ENCODE measurements at regions of chr1 and their contacts with region 1.

Region 1: DNA sequence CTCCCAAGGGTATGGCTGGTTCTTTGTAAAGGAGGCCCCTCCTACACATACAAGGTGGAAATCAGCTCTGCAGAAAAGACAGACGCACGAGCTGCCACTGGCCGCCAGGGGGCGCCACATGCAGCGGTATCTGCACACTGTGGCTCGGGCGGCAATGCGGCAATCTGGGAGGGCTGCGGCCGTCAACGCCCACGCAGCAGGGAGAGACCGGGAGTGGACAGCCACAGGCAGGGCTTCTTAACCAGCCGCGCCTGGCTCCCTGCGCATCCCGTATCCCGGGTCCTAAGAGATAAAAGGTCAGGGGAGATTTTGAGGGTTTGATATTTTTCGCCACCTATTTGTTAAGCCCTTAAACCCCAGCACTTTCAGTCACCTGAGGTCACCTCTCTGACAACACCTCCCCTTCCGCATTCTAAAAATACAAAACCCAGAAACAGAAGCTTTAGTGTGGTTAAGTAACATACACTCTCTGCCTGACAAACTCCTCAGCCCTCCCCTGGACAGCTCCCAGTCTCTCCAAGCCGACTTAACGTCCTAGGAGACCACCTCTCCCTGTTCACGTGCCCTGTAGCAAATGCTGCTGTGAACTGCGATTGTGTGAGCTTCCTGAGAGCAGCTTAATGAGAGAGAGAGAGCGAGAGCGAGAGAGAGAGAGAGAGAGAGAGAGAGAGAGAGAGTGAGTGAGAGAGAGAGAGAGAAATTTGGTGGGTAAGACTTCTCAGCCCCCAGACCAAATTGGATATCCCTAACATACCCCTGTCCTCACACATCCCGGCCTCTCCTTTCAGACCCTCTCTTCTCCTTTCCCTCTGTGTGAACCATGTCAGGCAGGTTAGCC is 13.5 kb upstream of the KCNA2 start:
- DNase-seq: peak; percentile 78
- H3K4me3 ChIP-seq: peak overlapping the region; percentile 32
- H3K27ac ChIP-seq: no peak overlapping the region
- H3K4me1 ChIP-seq: peaks cover 9% of the 10 kb centered on the region
- H3K27me3 ChIP-seq: peaks cover 75% of the 10 kb centered on the region
- CTCF ChIP-seq: peak; percentile 91

Region 2: GRCh38 chr1:110524311-110525251 is 95.0 kb before region 1 on chr1:
- intact Hi-C with region 1: loop called (anchors 10 kb)
- DNase-seq: no peak
- H3K4me3 ChIP-seq: peak overlapping the region; percentile 14
- H3K27ac ChIP-seq: no peak overlapping the region
- H3K4me1 ChIP-seq: peaks cover 8% of the 10 kb centered on the region
- H3K27me3 ChIP-seq: peaks cover 99% of the 10 kb centered on the region
- CTCF ChIP-seq: peak; percentile 77

Region 3: GRCh38 chr1:110554871-110555801 is 64.5 kb before region 1 on chr1:
- intact Hi-C with region 1: loop called (anchors 10 kb)
- DNase-seq: peak; percentile 54
- H3K4me3 ChIP-seq: peak overlapping the region; percentile 61
- H3K27ac ChIP-seq: peak overlapping the region; percentile 48
- H3K4me1 ChIP-seq: peaks cover 22% of the 10 kb centered on the region
- H3K27me3 ChIP-seq: peaks cover 92% of the 10 kb centered on the region
- CTCF ChIP-seq: peak; percentile 89

Region 4: GRCh38 chr1:110976089-110976488 is 356.5 kb after region 1 on chr1:
- intact Hi-C with region 1: no loop called
- DNase-seq: no peak
- H3K4me3 ChIP-seq: no peak overlapping the region
- H3K27ac ChIP-seq: no peak overlapping the region
- H3K4me1 ChIP-seq: no peaks in the 10 kb centered on the region
- H3K27me3 ChIP-seq: peaks cover 50% of the 10 kb centered on the region
- CTCF ChIP-seq: no peak

Measured in left ventricle myocardium inferior (tissue), 1 donor.